Activated CD4-positive, alpha-beta memory T cell treated with anti-CD3 and anti-CD28 coated beads for 36 hours (primary cell): ENCODE measurements at regions of chr20 and their contacts with region 1.

Region 1: GRCh38 chr20:34834459-34834893 is 9.0 kb upstream of the NCOA6 start:
- DNase-seq: no peak
- H3K4me3 Mint-ChIP-seq: no peak overlapping the region
- H3K27ac Mint-ChIP-seq: peak overlapping the region; percentile 42
- H3K4me1 Mint-ChIP-seq: no peaks in the 10 kb centered on the region
- H3K27me3 Mint-ChIP-seq: peaks cover 10% of the 10 kb centered on the region

Region 2: GRCh38 chr20:34791289-34792020 is 43.0 kb before region 1 on chr20:
- CTCF ChIA-PET with region 1: no interaction called
- POLR2A ChIA-PET with region 1: no interaction called
- intact Hi-C with region 1: no loop called
- DNase-seq: no peak
- H3K4me3 Mint-ChIP-seq: no peak overlapping the region
- H3K27ac Mint-ChIP-seq: no peak overlapping the region
- H3K4me1 Mint-ChIP-seq: peaks cover 11% of the 10 kb centered on the region
- H3K27me3 Mint-ChIP-seq: no peaks in the 10 kb centered on the region

Region 3: GRCh38 chr20:34815636-34816035 is 18.8 kb before region 1 on chr20:
- CTCF ChIA-PET with region 1: interaction called, 14 read pairs
- POLR2A ChIA-PET with region 1: no interaction called
- intact Hi-C with region 1: no loop called
- DNase-seq: no peak
- H3K4me3 Mint-ChIP-seq: no peak overlapping the region
- H3K27ac Mint-ChIP-seq: no peak overlapping the region
- H3K4me1 Mint-ChIP-seq: peaks cover 28% of the 10 kb centered on the region
- H3K27me3 Mint-ChIP-seq: no peaks in the 10 kb centered on the region

Region 4: GRCh38 chr20:34907616-34908469 is 73.4 kb after region 1 on chr20:
- CTCF ChIA-PET with region 1: no interaction called
- POLR2A ChIA-PET with region 1: no interaction called
- intact Hi-C with region 1: no loop called
- DNase-seq: no peak
- H3K4me3 Mint-ChIP-seq: no peak overlapping the region
- H3K27ac Mint-ChIP-seq: no peak overlapping the region
- H3K4me1 Mint-ChIP-seq: peaks cover 11% of the 10 kb centered on the region
- H3K27me3 Mint-ChIP-seq: no peaks in the 10 kb centered on the region

Region 5: DNA sequence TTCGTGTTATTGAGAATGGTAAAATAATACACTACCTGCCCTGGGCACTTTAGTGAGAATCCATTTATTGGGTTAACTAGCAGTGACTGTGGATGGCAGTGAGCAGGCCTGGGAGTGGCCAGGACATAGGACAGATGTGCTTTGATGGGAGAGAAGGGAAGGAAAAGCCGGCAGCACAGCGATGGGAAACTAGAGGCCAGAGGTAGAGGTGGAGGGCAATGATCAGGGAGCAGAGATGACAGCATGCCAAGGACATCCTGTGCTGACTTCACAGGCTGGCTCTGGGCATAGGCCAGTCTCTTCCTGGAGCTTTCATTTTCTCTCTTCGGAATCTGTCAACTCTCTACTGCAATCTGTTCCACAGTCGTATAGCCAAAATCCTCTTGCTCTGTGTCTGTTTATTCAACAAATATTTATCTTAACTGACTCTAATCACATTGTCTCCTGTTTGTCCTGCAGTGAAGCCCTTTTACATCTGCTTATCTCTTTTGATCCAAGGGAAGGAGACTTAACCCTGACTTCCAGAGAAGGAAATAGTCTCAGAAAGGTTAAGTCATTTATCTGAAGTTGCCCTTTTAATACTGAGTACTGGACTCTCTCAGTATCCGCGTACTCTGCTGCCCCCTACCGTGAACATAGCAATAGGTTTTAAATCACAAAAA is 373.6 kb after region 1 on chr20:
- CTCF ChIA-PET with region 1: interaction called, 3 read pairs
- POLR2A ChIA-PET with region 1: no interaction called
- intact Hi-C with region 1: loop called (anchors 1 kb)
- DNase-seq: peak; percentile 83
- H3K4me3 Mint-ChIP-seq: no peak overlapping the region
- H3K27ac Mint-ChIP-seq: no peak overlapping the region
- H3K4me1 Mint-ChIP-seq: no peaks in the 10 kb centered on the region
- H3K27me3 Mint-ChIP-seq: no peaks in the 10 kb centered on the region

Region 6: GRCh38 chr20:35232575-35232974 is 398.1 kb after region 1 on chr20:
- CTCF ChIA-PET with region 1: no interaction called
- POLR2A ChIA-PET with region 1: no interaction called
- intact Hi-C with region 1: no loop called
- DNase-seq: no peak
- H3K4me3 Mint-ChIP-seq: no peak overlapping the region
- H3K27ac Mint-ChIP-seq: no peak overlapping the region
- H3K4me1 Mint-ChIP-seq: no peaks in the 10 kb centered on the region
- H3K27me3 Mint-ChIP-seq: peaks cover 11% of the 10 kb centered on the region

Region 7: DNA sequence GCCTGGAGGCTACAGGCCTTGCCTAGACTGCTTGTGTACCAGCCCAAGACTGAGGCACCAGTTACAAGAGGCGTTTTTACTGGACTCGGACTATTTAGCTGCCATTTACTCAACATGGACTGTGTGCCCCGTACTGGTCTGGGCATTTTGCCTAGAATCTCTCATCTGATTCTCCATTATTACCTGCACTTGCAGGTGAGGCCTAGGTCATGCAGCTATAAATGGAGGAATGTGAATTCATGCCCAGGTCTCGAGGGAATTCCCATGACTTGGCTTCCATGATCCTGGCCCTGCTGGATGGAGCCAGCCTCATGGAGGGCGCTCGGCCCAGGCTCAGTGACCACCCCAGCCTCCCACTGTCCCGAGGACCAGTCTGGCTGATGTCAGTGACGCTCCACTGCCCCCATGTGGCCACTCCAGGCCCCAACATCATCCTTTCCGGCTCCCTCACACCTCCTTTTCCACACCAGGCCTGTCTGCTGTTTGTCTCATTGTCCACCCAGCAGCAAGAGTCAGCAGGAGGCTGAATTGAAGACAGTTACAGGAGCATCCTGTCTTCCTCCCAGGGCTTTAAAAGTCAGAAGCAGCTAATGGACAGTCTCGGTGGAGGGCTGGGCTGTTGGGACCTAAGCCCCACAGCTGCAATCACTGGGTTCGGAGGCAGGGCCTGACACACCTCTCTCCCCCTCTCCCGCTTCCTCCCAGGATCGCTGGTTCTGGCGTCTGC is 434.7 kb after region 1 on chr20:
- CTCF ChIA-PET with region 1: interaction called, 4 read pairs
- POLR2A ChIA-PET with region 1: no interaction called
- intact Hi-C with region 1: loop called (anchors 10 kb)
- DNase-seq: peak; percentile 65
- H3K4me3 Mint-ChIP-seq: no peak overlapping the region
- H3K27ac Mint-ChIP-seq: no peak overlapping the region
- H3K4me1 Mint-ChIP-seq: peaks cover 2% of the 10 kb centered on the region
- H3K27me3 Mint-ChIP-seq: no peaks in the 10 kb centered on the region